ENCODE measurements at regions of chr12 and their contacts with region 1.

Region 1: GRCh38 chr12:81257947-81258551 is 180.2 kb downstream of the ACSS3 start:
- ATAC-seq: peak in 2 of 8 experiments; percentile 31 to 57
- H3K4me3 ChIP-seq: no peak overlapping the region
- H3K27ac ChIP-seq: no peak overlapping the region
- H3K4me1 ChIP-seq: peaks cover 0 to 5% of the 10 kb centered on the region in 2 donors

Region 2: DNA sequence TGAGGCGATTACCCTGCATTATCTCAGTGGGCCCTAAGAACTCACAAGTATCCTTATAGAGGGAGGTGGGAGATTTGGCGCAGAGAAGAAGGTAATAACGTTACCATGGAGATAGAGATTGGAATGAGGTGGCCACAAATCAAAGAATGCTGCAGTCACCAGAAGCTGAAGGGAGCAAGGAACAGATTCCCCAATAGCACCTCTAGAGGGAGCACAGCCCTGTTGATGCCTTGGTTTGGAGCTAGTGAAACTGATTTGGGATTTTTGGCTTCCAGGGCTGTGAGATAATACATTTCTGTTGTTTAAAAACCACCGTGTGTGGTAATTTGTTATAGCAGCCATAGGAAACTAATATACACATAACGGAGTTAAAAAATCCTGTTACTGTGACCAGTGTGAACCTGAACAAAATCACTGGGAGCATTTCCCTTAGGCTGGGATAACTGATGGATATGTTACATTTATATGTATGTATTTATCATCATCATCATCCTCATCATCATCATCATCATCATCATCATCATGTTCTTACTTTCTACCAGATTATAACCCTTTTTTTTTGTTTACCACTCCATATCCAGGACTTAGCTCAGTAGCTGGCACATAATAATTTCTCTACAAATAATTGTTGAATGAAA is 420.6 kb before region 1 on chr12:
- in situ Hi-C with region 1: loop called in 1 of 9 experiments (anchors 25 kb)
- ATAC-seq: peak in 7 of 8 experiments; percentile 48 to 89 (median 77)
- H3K4me3 ChIP-seq: no peak overlapping the region
- H3K27ac ChIP-seq: no peak overlapping the region
- H3K4me1 ChIP-seq: peaks cover 15 to 27% of the 10 kb centered on the region in 2 donors

Region 3: GRCh38 chr12:81350309-81350708 is 92.3 kb after region 1 on chr12:
- in situ Hi-C with region 1: no loop called
- ATAC-seq: no peak
- H3K4me3 ChIP-seq: no peak overlapping the region
- H3K27ac ChIP-seq: no peak overlapping the region
- H3K4me1 ChIP-seq: no peaks in the 10 kb centered on the region